Panc1 (cell line): ENCODE measurements at regions of chr7 and their contacts with region 1.

Region 1: GRCh38 chr7:149866779-149867447 is 6.9 kb upstream of the ATP6V0E2 start:
- DNase-seq: no peak
- ATAC-seq: no peak
- H3K4me3 ChIP-seq: no peak overlapping the region
- H3K27ac ChIP-seq: no peak overlapping the region
- H3K4me1 ChIP-seq: no peaks in the 10 kb centered on the region
- H3K27me3 ChIP-seq: no peaks in the 10 kb centered on the region
- CTCF ChIP-seq: no peak

Region 2: GRCh38 chr7:151705636-151706276 is 1838.8 kb after region 1 on chr7:
- CTCF ChIA-PET with region 1: interaction called, 12 read pairs
- POLR2A ChIA-PET with region 1: no interaction called
- in situ Hi-C with region 1: no loop called
- intact Hi-C with region 1: no loop called
- DNase-seq: no peak
- ATAC-seq: peak; percentile 79
- H3K4me3 ChIP-seq: 0 out of 4 replicates have a peak overlapping the region, but pooled peaks of 1 of the 2 experiments have one; percentile 13
- H3K27ac ChIP-seq: peak overlapping the region; percentile 64
- H3K4me1 ChIP-seq: peaks cover 20% of the 10 kb centered on the region
- H3K27me3 ChIP-seq: no peaks in the 10 kb centered on the region
- CTCF ChIP-seq: peak; percentile 86